PC-3 (cell line): ENCODE measurements at regions of chr11 and their contacts with region 1.

Region 1: GRCh38 chr11:88680806-88681205 is 343.3 kb upstream of the CTSC start:
- DNase-seq: peak; percentile 43
- ATAC-seq: peak; percentile 69
- H3K4me3 ChIP-seq: no peak overlapping the region
- H3K27ac ChIP-seq: no peak overlapping the region
- H3K4me1 ChIP-seq: no peaks in the 10 kb centered on the region
- H3K27me3 ChIP-seq: no peaks in the 10 kb centered on the region
- CTCF ChIP-seq: no peak

Region 2: GRCh38 chr11:88666364-88666763 is 14.4 kb before region 1 on chr11:
- CTCF ChIA-PET with region 1: no interaction called
- POLR2A ChIA-PET with region 1: interaction called, 11 read pairs
- intact Hi-C with region 1: no loop called
- DNase-seq: no peak
- ATAC-seq: no peak
- H3K4me3 ChIP-seq: no peak overlapping the region
- H3K27ac ChIP-seq: no peak overlapping the region
- H3K4me1 ChIP-seq: no peaks in the 10 kb centered on the region
- H3K27me3 ChIP-seq: no peaks in the 10 kb centered on the region
- CTCF ChIP-seq: no peak

Region 3: GRCh38 chr11:89125298-89125697 is 444.5 kb after region 1 on chr11:
- CTCF ChIA-PET with region 1: no interaction called
- POLR2A ChIA-PET with region 1: no interaction called
- intact Hi-C with region 1: loop called (anchors 10 kb)
- DNase-seq: no peak
- ATAC-seq: no peak
- H3K4me3 ChIP-seq: no peak overlapping the region
- H3K27ac ChIP-seq: no peak overlapping the region
- H3K4me1 ChIP-seq: no peaks in the 10 kb centered on the region
- H3K27me3 ChIP-seq: no peaks in the 10 kb centered on the region
- CTCF ChIP-seq: no peak